ENCODE measurements at regions of chr3 and their contacts with region 1.

Region 1: GRCh38 chr3:187319699-187320302 is 28.3 kb upstream of the MASP1 start:
- DNase-seq: peak; percentile 77
- H3K4me3 Mint-ChIP-seq: no peak overlapping the region
- H3K27ac Mint-ChIP-seq: no peak overlapping the region
- H3K4me1 Mint-ChIP-seq: peaks cover 6% of the 10 kb centered on the region
- H3K27me3 Mint-ChIP-seq: peaks cover 41% of the 10 kb centered on the region
- CTCF ChIP-seq: peak; percentile 80

Region 2: DNA sequence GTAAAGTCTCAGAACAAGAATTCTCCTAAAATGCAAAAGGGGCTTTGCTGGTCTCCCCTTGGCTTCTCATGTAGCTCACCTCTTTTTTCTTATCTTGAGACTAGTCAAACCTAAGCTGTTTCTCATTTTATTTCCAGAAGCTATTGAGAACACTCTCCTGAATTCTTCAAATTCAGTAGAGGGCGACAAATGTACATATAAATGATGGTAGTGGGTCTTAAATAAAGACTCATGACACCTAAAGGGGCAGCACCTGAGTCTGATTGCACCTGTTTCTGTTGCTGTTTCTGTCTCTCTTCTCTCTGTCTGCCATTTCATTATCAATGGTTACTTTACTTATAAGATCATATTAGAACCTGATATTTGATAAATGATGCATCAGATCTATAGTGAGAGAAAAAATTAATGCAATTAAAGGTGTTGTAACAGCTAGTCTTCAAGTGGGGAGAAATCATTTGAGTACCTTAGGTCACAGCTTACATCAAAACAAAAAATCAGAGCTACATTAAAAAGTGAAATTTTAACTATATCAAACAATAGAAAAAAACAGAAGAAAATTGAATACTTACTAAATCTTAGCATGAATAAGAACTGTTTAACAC is 470.3 kb before region 1 on chr3:
- CTCF ChIA-PET with region 1: interaction called, 5 read pairs
- POLR2A ChIA-PET with region 1: no interaction called
- intact Hi-C with region 1: loop called (anchors 5 kb)
- DNase-seq: peak; percentile 55
- H3K4me3 Mint-ChIP-seq: no peak overlapping the region
- H3K27ac Mint-ChIP-seq: no peak overlapping the region
- H3K4me1 Mint-ChIP-seq: no peaks in the 10 kb centered on the region
- H3K27me3 Mint-ChIP-seq: peaks cover 29% of the 10 kb centered on the region
- CTCF ChIP-seq: peak; percentile 47

Region 3: DNA sequence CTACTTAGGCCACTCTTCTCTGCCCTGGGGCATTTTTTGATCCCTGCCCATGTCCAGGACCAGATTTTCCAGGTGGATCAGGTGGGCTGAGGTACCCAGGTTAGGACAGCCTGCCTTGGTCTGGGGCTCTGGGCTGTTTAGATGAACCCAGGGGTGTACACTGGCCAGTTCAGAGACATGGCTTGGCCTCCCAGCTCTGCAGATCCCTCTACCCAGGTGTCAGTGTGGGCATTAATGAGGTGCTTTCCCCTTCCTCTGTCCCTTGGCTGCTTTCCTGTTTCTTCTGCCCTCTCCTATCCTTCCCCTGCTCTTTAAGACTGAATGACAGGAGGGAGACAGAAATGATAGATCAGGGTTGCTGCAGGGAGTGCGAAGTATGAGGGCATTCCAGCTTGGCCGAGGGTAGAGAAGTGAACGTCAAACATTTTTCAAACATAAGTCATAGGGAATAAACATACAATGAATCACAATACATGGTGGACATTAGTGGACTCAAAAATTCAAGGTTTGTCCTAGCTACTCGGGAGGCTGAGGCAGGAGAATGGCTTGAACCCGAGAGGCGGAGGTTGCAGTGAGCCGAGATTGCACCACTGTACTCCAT is 92.0 kb before region 1 on chr3:
- CTCF ChIA-PET with region 1: interaction called, 95 read pairs
- POLR2A ChIA-PET with region 1: no interaction called
- intact Hi-C with region 1: no loop called
- DNase-seq: peak; percentile 45
- H3K4me3 Mint-ChIP-seq: no peak overlapping the region
- H3K27ac Mint-ChIP-seq: no peak overlapping the region
- H3K4me1 Mint-ChIP-seq: peaks cover 27% of the 10 kb centered on the region
- H3K27me3 Mint-ChIP-seq: no peaks in the 10 kb centered on the region
- CTCF ChIP-seq: no peak

Region 4: GRCh38 chr3:187305881-187306280 is 13.9 kb before region 1 on chr3:
- CTCF ChIA-PET with region 1: interaction called, 56 read pairs
- POLR2A ChIA-PET with region 1: no interaction called
- intact Hi-C with region 1: no loop called
- DNase-seq: no peak
- H3K4me3 Mint-ChIP-seq: no peak overlapping the region
- H3K27ac Mint-ChIP-seq: no peak overlapping the region
- H3K4me1 Mint-ChIP-seq: no peaks in the 10 kb centered on the region
- H3K27me3 Mint-ChIP-seq: peaks cover 96% of the 10 kb centered on the region
- CTCF ChIP-seq: no peak

Region 5: GRCh38 chr3:187465503-187465902 is 145.7 kb after region 1 on chr3:
- CTCF ChIA-PET with region 1: no interaction called
- POLR2A ChIA-PET with region 1: no interaction called
- intact Hi-C with region 1: no loop called
- DNase-seq: no peak
- H3K4me3 Mint-ChIP-seq: no peak overlapping the region
- H3K27ac Mint-ChIP-seq: no peak overlapping the region
- H3K4me1 Mint-ChIP-seq: no peaks in the 10 kb centered on the region
- H3K27me3 Mint-ChIP-seq: peaks cover 46% of the 10 kb centered on the region
- CTCF ChIP-seq: no peak

Region 6: DNA sequence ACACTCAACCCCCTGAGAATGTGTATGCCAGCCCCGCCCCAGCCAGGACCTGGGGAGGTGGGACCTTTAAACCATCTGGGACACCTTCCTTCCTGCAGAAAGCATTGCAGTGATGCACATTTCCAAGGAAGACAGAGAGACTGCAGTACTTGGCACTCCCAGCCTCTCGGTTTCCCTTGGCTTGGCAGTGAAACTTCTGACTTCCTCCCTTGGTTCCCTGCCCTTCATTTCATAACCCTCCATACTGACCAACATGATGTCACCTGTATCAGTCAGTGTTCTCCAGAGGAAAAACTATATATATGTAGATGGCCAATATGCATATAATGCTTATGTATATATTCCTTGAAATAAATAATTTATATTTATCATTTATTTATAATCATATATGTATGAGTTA is 247.2 kb after region 1 on chr3:
- CTCF ChIA-PET with region 1: interaction called, 12 read pairs
- POLR2A ChIA-PET with region 1: no interaction called
- intact Hi-C with region 1: no loop called
- DNase-seq: peak; percentile 54
- H3K4me3 Mint-ChIP-seq: no peak overlapping the region
- H3K27ac Mint-ChIP-seq: no peak overlapping the region
- H3K4me1 Mint-ChIP-seq: no peaks in the 10 kb centered on the region
- H3K27me3 Mint-ChIP-seq: peaks cover 19% of the 10 kb centered on the region
- CTCF ChIP-seq: no peak

Region 7: GRCh38 chr3:187662848-187663409 is 343.1 kb after region 1 on chr3:
- CTCF ChIA-PET with region 1: interaction called, 629 read pairs
- POLR2A ChIA-PET with region 1: no interaction called
- intact Hi-C with region 1: no loop called
- DNase-seq: no peak
- H3K4me3 Mint-ChIP-seq: no peak overlapping the region
- H3K27ac Mint-ChIP-seq: no peak overlapping the region
- H3K4me1 Mint-ChIP-seq: no peaks in the 10 kb centered on the region
- H3K27me3 Mint-ChIP-seq: peaks cover 46% of the 10 kb centered on the region
- CTCF ChIP-seq: no peak

Region 8: GRCh38 chr3:187705164-187705563 is 385.4 kb after region 1 on chr3:
- CTCF ChIA-PET with region 1: interaction called, 49 read pairs
- POLR2A ChIA-PET with region 1: no interaction called
- intact Hi-C with region 1: no loop called
- DNase-seq: no peak
- H3K4me3 Mint-ChIP-seq: no peak overlapping the region
- H3K27ac Mint-ChIP-seq: no peak overlapping the region
- H3K4me1 Mint-ChIP-seq: no peaks in the 10 kb centered on the region
- H3K27me3 Mint-ChIP-seq: no peaks in the 10 kb centered on the region
- CTCF ChIP-seq: no peak

Region 9: GRCh38 chr3:187935623-187936156 is 615.9 kb after region 1 on chr3:
- CTCF ChIA-PET with region 1: no interaction called
- POLR2A ChIA-PET with region 1: no interaction called
- intact Hi-C with region 1: no loop called
- DNase-seq: no peak
- H3K4me3 Mint-ChIP-seq: no peak overlapping the region
- H3K27ac Mint-ChIP-seq: no peak overlapping the region
- H3K4me1 Mint-ChIP-seq: no peaks in the 10 kb centered on the region
- H3K27me3 Mint-ChIP-seq: no peaks in the 10 kb centered on the region
- CTCF ChIP-seq: no peak

Measured in MCF 10A (cell line).